ENCODE measurements at regions of chr12 and their contacts with region 1.

Region 1: DNA sequence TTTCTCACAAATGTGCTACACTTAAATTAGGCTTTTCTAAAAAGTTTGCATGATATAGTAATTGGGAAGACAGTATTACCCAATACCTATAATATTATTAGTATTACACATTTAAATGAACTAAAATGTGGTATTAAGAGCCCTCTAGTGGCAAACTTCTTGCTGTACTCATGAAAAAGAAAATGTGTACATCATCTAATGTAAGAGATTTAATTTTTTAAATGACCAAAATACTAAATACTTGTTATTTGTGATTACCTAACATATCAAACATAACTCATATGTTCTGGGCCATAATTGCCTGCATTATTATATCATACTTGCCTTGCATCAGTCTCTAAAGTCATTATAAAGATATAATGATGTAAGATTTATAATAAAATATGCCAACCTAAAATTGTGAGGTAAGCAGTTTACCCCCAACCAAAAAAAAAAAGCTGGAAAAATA is 64.2 kb downstream of the DNAI7 start:
- DNase-seq: no peak
- ATAC-seq: no peak

Region 2: GRCh38 chr12:24991209-24992049 is 139.3 kb before region 1 on chr12:
- intact Hi-C with region 1: loop called in 1 of 2 experiments (anchors 2 kb)
- DNase-seq: no peak
- ATAC-seq: peak; percentile 72

Region 3: GRCh38 chr12:25034676-25035075 is 96.1 kb before region 1 on chr12:
- intact Hi-C with region 1: no loop called
- DNase-seq: no peak
- ATAC-seq: no peak